ENCODE measurements at regions of chr12 and their contacts with region 1.

Region 1: DNA sequence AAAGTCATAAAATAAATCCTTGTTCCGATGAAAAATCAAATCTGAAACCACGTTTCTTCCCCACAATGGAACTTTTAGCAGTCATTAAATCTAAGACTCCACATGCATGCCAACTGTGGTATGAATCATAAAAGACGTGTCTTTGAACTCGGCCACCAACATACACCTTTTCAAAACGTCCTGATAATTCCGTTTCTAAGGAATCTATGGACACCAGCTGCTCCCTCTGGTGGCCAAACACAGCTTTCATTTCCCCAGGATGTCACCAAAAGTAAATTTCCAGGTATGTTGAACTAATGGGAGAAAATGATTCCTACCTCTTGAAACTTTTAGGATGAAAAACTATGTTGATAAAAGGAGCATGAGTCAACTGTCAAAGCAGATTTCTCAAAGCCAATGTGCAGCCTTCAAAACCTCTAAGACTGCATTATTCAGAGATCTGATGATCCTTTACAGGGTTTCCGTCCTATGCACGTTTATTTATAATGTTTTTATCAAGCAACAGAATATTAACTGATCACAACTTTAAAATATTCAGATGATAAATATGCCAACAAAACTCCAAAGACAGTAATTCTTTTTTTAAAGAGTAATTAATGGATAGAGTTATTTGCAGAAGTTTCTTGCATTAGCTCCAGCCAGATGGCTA is 96.2 kb downstream of the CIT start:
- DNase-seq: peak; percentile 72
- H3K4me3 Mint-ChIP-seq: peak overlapping the region; percentile 47
- H3K27ac Mint-ChIP-seq: no peak overlapping the region
- H3K4me1 Mint-ChIP-seq: peaks cover 5% of the 10 kb centered on the region
- H3K27me3 Mint-ChIP-seq: no peaks in the 10 kb centered on the region
- CTCF ChIP-seq: peak; percentile 75

Region 2: GRCh38 chr12:119319638-119320037 is 461.3 kb before region 1 on chr12:
- CTCF ChIA-PET with region 1: no interaction called
- POLR2A ChIA-PET with region 1: no interaction called
- intact Hi-C with region 1: no loop called
- DNase-seq: no peak
- H3K4me3 Mint-ChIP-seq: no peak overlapping the region
- H3K27ac Mint-ChIP-seq: no peak overlapping the region
- H3K4me1 Mint-ChIP-seq: no peaks in the 10 kb centered on the region
- H3K27me3 Mint-ChIP-seq: no peaks in the 10 kb centered on the region
- CTCF ChIP-seq: no peak

Region 3: DNA sequence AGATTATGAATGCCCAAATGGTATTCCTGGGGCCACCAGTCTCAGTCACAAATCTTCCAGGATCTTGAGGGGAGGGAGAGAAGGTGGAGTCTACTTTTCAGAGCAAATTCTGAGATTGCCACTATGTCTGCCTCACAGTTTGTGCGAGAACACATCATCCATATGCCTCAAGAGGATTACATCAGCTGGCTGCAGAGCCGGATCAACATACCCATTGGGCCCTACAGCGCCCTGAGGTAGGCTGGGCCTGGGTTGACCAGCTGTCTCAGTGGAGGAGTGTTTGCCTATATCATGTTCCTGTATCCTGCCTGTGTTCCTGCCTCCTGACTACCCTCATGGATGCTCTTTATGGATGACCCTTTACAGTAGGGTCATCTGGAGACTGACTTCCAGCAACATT is 240.4 kb before region 1 on chr12:
- CTCF ChIA-PET with region 1: no interaction called
- POLR2A ChIA-PET with region 1: no interaction called
- intact Hi-C with region 1: no loop called
- DNase-seq: no peak
- H3K4me3 Mint-ChIP-seq: no peak overlapping the region
- H3K27ac Mint-ChIP-seq: no peak overlapping the region
- H3K4me1 Mint-ChIP-seq: no peaks in the 10 kb centered on the region
- H3K27me3 Mint-ChIP-seq: peaks cover 17% of the 10 kb centered on the region
- CTCF ChIP-seq: no peak

Region 4: GRCh38 chr12:119695034-119695433 is 85.9 kb before region 1 on chr12:
- CTCF ChIA-PET with region 1: interaction called, 31 read pairs
- POLR2A ChIA-PET with region 1: interaction called, 3 read pairs
- intact Hi-C with region 1: loop called (anchors 10 kb)
- DNase-seq: peak; percentile 18
- H3K4me3 Mint-ChIP-seq: no peak overlapping the region
- H3K27ac Mint-ChIP-seq: no peak overlapping the region
- H3K4me1 Mint-ChIP-seq: peaks cover 19% of the 10 kb centered on the region
- H3K27me3 Mint-ChIP-seq: no peaks in the 10 kb centered on the region
- CTCF ChIP-seq: peak; percentile 20

Region 5: GRCh38 chr12:119804011-119804641 is 23.2 kb after region 1 on chr12:
- CTCF ChIA-PET with region 1: interaction called, 28 read pairs
- POLR2A ChIA-PET with region 1: interaction called, 5 read pairs
- intact Hi-C with region 1: no loop called
- DNase-seq: peak; percentile 76
- H3K4me3 Mint-ChIP-seq: no peak overlapping the region
- H3K27ac Mint-ChIP-seq: peak overlapping the region; percentile 50
- H3K4me1 Mint-ChIP-seq: peaks cover 13% of the 10 kb centered on the region
- H3K27me3 Mint-ChIP-seq: no peaks in the 10 kb centered on the region
- CTCF ChIP-seq: peak; percentile 27

Region 6: DNA sequence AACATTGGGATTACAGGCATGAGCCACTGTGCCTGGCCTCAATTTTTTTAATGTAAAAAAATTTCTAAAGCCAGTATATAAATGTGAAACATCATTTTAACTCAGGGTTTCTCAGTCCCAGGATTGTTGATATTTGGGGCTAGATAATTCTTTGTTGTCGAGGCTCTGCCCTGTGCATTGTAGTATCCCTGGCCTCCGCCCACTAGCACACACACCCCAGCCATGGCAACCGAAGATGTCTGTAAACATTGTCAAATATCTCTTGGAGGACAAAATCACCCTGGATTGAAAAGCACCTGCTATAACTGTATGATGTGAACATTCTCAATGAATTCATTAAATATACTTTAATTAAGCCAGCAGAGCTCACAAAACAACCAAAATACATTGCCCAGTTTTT is 104.6 kb after region 1 on chr12:
- CTCF ChIA-PET with region 1: no interaction called
- POLR2A ChIA-PET with region 1: no interaction called
- intact Hi-C with region 1: no loop called
- DNase-seq: no peak
- H3K4me3 Mint-ChIP-seq: no peak overlapping the region
- H3K27ac Mint-ChIP-seq: no peak overlapping the region
- H3K4me1 Mint-ChIP-seq: no peaks in the 10 kb centered on the region
- H3K27me3 Mint-ChIP-seq: no peaks in the 10 kb centered on the region
- CTCF ChIP-seq: no peak

Region 7: GRCh38 chr12:119902084-119902509 is 121.2 kb after region 1 on chr12:
- CTCF ChIA-PET with region 1: interaction called, 17 read pairs
- POLR2A ChIA-PET with region 1: interaction called, 4 read pairs
- intact Hi-C with region 1: loop called (anchors 2 kb)
- DNase-seq: peak; percentile 78
- H3K4me3 Mint-ChIP-seq: no peak overlapping the region
- H3K27ac Mint-ChIP-seq: no peak overlapping the region
- H3K4me1 Mint-ChIP-seq: peaks cover 10% of the 10 kb centered on the region
- H3K27me3 Mint-ChIP-seq: no peaks in the 10 kb centered on the region
- CTCF ChIP-seq: peak; percentile 86

Measured in MCF 10A (cell line).